ENCODE measurements at regions of chr16 and their contacts with region 1.

Region 1: GRCh38 chr16:10737068-10737625 is 6.5 kb upstream of the NUBP1 start:
- DNase-seq: peak; percentile 65 to 70
- ATAC-seq: peak; percentile 65 to 81; a peak in 5 of 6 replicates
- H3K4me3 ChIP-seq: no peak overlapping the region
- H3K27ac ChIP-seq: peak overlapping the region; percentile 44 to 66; a peak in 4 of 6 replicates
- H3K4me1 ChIP-seq: peaks cover 26% of the 10 kb centered on the region
- CTCF ChIP-seq: peak; percentile 94
- EP300 ChIP-seq: no peak
- POLR2A ChIP-seq: no peak
- RAD21 ChIP-seq: peak; percentile 95 to 96

Region 2: GRCh38 chr16:10256784-10257641 is 480.1 kb before region 1 on chr16:
- CTCF ChIA-PET with region 1: interaction called, 13 read pairs
- POLR2A ChIA-PET with region 1: no interaction called
- DNase-seq: peak; percentile 38 to 56
- ATAC-seq: peak; percentile 90
- H3K4me3 ChIP-seq: no peak overlapping the region
- H3K27ac ChIP-seq: no peak overlapping the region
- H3K4me1 ChIP-seq: peaks cover 7% of the 10 kb centered on the region; the same call in 1 of the 3 replicates
- CTCF ChIP-seq: peak; percentile 68
- EP300 ChIP-seq: no peak
- POLR2A ChIP-seq: no peak
- RAD21 ChIP-seq: peak; percentile 73 to 74

Region 3: DNA sequence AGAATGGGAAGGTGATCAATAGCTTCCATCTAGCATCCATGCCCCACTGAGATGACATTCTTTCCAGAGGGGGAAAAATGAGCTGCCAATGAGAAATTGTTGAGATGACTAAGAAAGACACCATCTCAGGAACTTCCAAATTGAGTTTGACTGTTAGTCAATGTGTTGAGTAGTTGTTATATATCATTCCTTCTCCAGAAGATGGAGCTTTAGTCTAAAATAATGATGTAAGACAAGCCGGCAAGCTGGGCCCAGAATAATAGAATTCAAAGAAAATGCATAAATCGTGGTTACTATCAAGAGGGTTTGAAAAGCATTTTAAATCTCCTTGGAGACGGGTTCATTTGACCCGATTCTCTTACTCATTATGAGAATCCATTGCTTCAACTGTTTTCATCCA is 422.3 kb before region 1 on chr16:
- CTCF ChIA-PET with region 1: interaction called, 17 read pairs
- POLR2A ChIA-PET with region 1: no interaction called
- DNase-seq: no peak
- ATAC-seq: peak; percentile 43 to 59; a peak in 3 of 6 replicates
- H3K4me3 ChIP-seq: no peak overlapping the region
- H3K27ac ChIP-seq: no peak overlapping the region
- H3K4me1 ChIP-seq: 0 out of 3 replicates have a peak, but pooled peaks cover 3% of the 10 kb centered on the region
- CTCF ChIP-seq: peak; percentile 27
- EP300 ChIP-seq: no peak
- POLR2A ChIP-seq: no peak
- RAD21 ChIP-seq: peak; percentile 44 to 53; a peak in 4 of 5 replicates

Region 4: GRCh38 chr16:10521681-10522274 is 215.4 kb before region 1 on chr16:
- CTCF ChIA-PET with region 1: interaction called, 198 read pairs
- POLR2A ChIA-PET with region 1: no interaction called
- DNase-seq: peak; percentile 45 to 69
- ATAC-seq: peak; percentile 47 to 83; a peak in 3 of 6 replicates
- H3K4me3 ChIP-seq: no peak overlapping the region
- H3K27ac ChIP-seq: peak overlapping the region in 1 of 2 experiments; percentile 80; a peak in 1 of 6 replicates
- H3K4me1 ChIP-seq: peaks cover 14% of the 10 kb centered on the region
- CTCF ChIP-seq: peak; percentile 67
- EP300 ChIP-seq: no peak
- POLR2A ChIP-seq: no peak
- RAD21 ChIP-seq: peak; percentile 52 to 72

Region 5: DNA sequence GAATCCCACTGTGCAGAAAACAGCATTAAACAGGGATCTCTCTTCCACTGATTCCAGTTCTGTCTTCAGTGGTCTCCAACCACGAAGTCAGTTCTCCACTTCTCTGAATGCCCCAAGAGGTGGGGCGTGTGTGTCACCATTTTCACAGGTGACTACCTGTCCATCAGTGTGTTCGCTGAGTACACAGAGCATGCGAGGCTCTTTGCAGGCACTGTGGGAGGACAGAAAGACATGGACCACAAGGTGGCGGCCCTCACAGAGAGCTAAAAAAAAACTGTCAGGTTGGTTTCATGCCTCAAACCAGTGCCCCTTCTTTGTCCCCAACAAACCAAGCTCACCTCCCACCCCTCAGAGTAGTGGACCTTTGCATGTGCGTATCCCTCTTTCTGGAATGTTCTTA is 170.6 kb before region 1 on chr16:
- CTCF ChIA-PET with region 1: interaction called, 10 read pairs
- POLR2A ChIA-PET with region 1: no interaction called
- DNase-seq: no peak
- ATAC-seq: peak in 1 of 2 experiments; percentile 40; a peak in 1 of 6 replicates
- H3K4me3 ChIP-seq: no peak overlapping the region
- H3K27ac ChIP-seq: no peak overlapping the region
- H3K4me1 ChIP-seq: no peaks in the 10 kb centered on the region
- CTCF ChIP-seq: no peak
- EP300 ChIP-seq: no peak
- POLR2A ChIP-seq: no peak
- RAD21 ChIP-seq: 0 out of 5 replicates have a peak, but pooled peaks of 1 of the 2 experiments have one; percentile 8

Region 6: DNA sequence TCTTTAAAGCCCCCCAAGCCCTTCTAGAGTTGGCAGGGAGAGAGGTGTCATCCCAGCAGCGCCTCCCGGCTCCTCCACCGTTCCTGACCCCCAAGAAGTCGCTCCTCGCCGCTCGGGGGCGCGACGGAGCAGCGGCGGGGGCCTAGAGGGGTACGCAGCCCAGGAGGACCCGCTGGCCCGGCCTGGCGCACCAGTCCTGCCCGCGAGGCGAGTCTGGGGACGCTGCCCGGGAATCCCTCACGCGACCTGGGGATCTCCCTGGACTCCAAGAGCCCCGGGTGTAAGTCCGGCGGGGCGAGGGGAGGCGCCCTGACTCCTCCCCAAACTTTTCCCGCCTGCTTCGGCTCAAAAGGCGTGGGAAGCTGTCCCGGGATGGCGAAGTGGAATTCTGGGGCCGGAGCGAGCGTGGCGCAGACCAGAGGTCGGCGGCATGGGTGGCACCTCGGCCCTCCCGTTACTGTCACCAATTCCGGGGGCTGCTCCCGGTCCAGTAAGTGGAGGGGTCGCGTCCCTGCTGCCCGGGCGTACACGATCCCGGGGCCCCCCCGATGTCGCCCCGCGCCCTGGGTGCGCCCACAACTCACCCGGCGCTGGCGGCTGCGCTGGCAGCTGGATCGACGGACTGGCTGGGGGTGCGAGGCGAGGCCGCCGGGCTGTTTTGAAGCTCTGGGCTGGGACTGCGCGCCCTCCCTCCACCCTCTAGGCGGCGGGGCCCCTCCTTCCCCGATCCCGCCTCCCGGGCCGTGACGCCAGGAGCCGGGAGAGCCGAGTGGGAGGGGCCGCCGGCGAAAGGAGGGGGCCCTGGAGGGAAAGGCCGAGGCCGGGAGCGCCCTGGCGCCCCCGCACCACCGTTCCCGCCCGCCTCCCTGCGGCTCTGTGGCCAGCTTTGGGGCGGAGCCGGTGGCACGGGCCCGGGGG is 156.9 kb before region 1 on chr16 and contains the start of gene EMP2:
- CTCF ChIA-PET with region 1: interaction called, 10 read pairs
- POLR2A ChIA-PET with region 1: no interaction called
- DNase-seq: peak; percentile 75 to 90
- ATAC-seq: peak; percentile 89 to 97
- H3K4me3 ChIP-seq: peak within 1 kb of the TSS; percentile 89
- H3K27ac ChIP-seq: peak within 1 kb of the TSS; percentile 89 to 95
- H3K4me1 ChIP-seq: 0 out of 3 replicates have a peak, but pooled peaks cover 8% of the 10 kb centered on the region
- CTCF ChIP-seq: peak; percentile 67
- EP300 ChIP-seq: no peak
- POLR2A ChIP-seq: peak; percentile 58
- RAD21 ChIP-seq: peak; percentile 34 to 49; a peak in 4 of 5 replicates
- polyA plus RNA-seq, gene EMP2: 21.4 and 26.5 TPM in 2 replicates

Region 7: DNA sequence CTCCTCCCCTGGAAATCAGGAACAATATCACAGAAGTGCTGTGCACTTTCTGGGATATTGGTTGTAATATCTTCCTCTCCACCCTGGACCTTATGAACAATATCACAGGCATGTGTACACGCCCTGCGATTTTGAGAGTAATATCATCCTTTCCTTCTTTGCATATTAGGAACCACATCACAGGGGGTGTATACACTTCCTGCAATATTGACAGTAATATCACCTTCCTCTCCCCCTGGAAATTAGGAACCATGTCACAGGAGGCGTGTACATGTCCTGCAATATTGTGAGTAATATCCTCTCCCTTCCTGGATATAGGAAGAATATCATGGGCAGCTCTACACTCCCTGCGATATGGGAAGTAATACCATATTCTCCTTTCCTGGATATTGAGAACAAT is 28.2 kb before region 1 on chr16:
- CTCF ChIA-PET with region 1: no interaction called
- POLR2A ChIA-PET with region 1: no interaction called
- DNase-seq: no peak
- ATAC-seq: peak in 1 of 2 experiments; percentile 38; a peak in 3 of 6 replicates
- H3K4me3 ChIP-seq: no peak overlapping the region
- H3K27ac ChIP-seq: no peak overlapping the region
- H3K4me1 ChIP-seq: no peaks in the 10 kb centered on the region
- CTCF ChIP-seq: no peak
- EP300 ChIP-seq: no peak
- POLR2A ChIP-seq: no peak
- RAD21 ChIP-seq: no peak

Measured in A549 (cell line).